Aorta (tissue), 5 donors: ENCODE measurements at regions of chr15 and their contacts with region 1.

Region 1: GRCh38 chr15:74240002-74240568 is 4.0 kb downstream of the CCDC33 start:
- DNase-seq: peak; percentile 94
- ATAC-seq: peak; percentile 79
- H3K4me3 ChIP-seq: no peak overlapping the region
- H3K27ac ChIP-seq: no peak overlapping the region
- H3K4me1 ChIP-seq: no peaks in the 10 kb centered on the region
- H3K27me3 ChIP-seq: no peaks in the 10 kb centered on the region

Region 2: GRCh38 chr15:74134387-74135027 is 105.6 kb before region 1 on chr15:
- intact Hi-C with region 1: loop called in 1 of 2 experiments (anchors 10 kb)
- DNase-seq: peak; percentile 79 to 85
- ATAC-seq: no peak
- H3K4me3 ChIP-seq: no peak overlapping the region
- H3K27ac ChIP-seq: no peak overlapping the region
- H3K4me1 ChIP-seq: no peaks in the 10 kb centered on the region
- H3K27me3 ChIP-seq: peaks cover 0 to 4% of the 10 kb centered on the region in 2 donors